ENCODE measurements at regions of chr1 and their contacts with region 1.

Region 1: DNA sequence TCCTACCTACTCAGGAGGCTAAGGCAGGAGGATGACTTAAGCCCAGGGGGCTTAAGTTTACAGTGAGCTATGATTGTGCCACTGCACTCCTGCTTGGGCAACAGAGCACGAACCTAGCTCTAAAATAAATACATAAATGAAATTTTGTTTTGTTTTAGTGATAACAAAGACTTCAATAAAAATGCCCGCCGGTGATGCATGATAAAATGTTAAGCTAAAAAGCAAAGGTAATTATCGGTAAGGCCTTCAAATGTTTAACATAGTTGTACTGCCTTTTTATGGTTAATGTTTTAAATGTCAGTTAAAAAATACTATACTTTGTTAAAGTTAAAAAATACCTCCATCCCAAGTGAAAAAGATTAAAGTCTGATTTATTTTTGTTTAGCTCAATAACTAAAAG is 27.0 kb downstream of the KDM5B start:
- DNase-seq: no peak
- H3K4me3 ChIP-seq: no peak overlapping the region
- H3K27ac ChIP-seq: no peak overlapping the region
- H3K4me1 ChIP-seq: peaks cover 0 to 6% (median 4%) of the 10 kb centered on the region in 4 experiments
- H3K27me3 ChIP-seq: no peaks in the 10 kb centered on the region

Region 2: DNA sequence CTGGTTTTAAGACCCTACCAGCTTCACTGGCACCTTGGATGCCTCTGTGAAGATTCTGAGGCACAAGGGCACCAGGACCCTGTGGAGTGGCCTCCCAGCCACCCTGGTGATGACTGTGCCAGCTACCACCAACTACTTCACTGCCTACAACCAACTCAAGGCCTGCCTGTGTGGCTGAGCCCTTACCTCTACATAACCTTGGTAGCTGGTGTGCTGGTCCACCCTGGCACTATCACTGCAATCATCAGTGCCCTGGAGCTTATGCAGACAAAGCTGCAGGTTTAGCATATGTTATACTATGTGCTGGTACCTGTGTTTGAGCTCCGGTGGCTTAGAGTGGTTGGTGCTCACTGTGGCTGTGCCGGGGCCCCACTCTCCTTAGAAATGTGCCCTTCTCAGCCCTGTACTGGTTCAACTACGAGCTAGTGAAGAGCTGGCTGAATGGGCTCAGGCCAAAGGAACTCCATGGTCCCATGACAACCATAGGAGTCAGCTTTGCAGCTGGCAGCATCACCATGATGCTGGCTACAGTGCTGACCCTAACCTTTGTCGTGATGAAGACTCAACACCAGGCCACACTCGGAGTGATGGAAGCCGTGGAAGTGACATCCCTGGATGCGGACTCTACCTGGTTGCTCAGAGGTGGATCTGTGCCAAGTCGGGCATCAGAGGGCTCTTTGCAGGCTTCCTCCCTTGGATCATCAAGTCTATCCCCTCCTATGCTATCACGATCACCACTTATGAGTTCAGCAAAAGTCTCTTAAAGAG is 15.3 kb after region 1 on chr1:
- CTCF ChIA-PET with region 1: interaction called, 6 read pairs
- POLR2A ChIA-PET with region 1: interaction called, 10 read pairs
- DNase-seq: no peak
- H3K4me3 ChIP-seq: no peak overlapping the region
- H3K27ac ChIP-seq: no peak overlapping the region
- H3K4me1 ChIP-seq: peaks cover 0 to 23% (median 10%) of the 10 kb centered on the region in 4 experiments
- H3K27me3 ChIP-seq: no peaks in the 10 kb centered on the region